CD4-positive, alpha-beta T cell (primary cell): ENCODE measurements at regions of chr15 and their contacts with region 1.

Region 1: GRCh38 chr15:78065284-78065872 is 12.1 kb downstream of the TBC1D2B start:
- DNase-seq: peak in 3 of 14 experiments; percentile 50 to 65 (median 50)
- ATAC-seq: peak; percentile 13
- H3K4me3 ChIP-seq: peak overlapping the region; percentile 9
- H3K4me3 Mint-ChIP-seq: no peak overlapping the region
- H3K27ac ChIP-seq: peak overlapping the region; percentile 39 to 79
- H3K27ac Mint-ChIP-seq: no peak overlapping the region
- H3K4me1 ChIP-seq: peaks cover 86% of the 10 kb centered on the region
- H3K4me1 Mint-ChIP-seq: peaks cover 2% of the 10 kb centered on the region
- H3K27me3 ChIP-seq: no peaks in the 10 kb centered on the region
- H3K27me3 Mint-ChIP-seq: no peaks in the 10 kb centered on the region
- CTCF ChIP-seq: no peak

Region 2: GRCh38 chr15:78044407-78045155 is 20.8 kb before region 1 on chr15:
- CTCF ChIA-PET with region 1: interaction called, 22 read pairs
- POLR2A ChIA-PET with region 1: interaction called, 304 read pairs
- intact Hi-C with region 1: no loop called
- DNase-seq: peak in 3 of 14 experiments; percentile 63 to 69 (median 67)
- ATAC-seq: peak; percentile 41
- H3K4me3 ChIP-seq: no peak overlapping the region
- H3K4me3 Mint-ChIP-seq: peak overlapping the region; percentile 69
- H3K27ac ChIP-seq: peak overlapping the region in 1 of 2 donors; percentile 78
- H3K27ac Mint-ChIP-seq: peak overlapping the region; percentile 84
- H3K4me1 ChIP-seq: peaks cover 87% of the 10 kb centered on the region
- H3K4me1 Mint-ChIP-seq: peaks cover 93% of the 10 kb centered on the region
- H3K27me3 ChIP-seq: no peaks in the 10 kb centered on the region
- H3K27me3 Mint-ChIP-seq: no peaks in the 10 kb centered on the region
- CTCF ChIP-seq: no peak

Region 3: GRCh38 chr15:78049691-78050440 is 15.5 kb before region 1 on chr15:
- CTCF ChIA-PET with region 1: interaction called, 22 read pairs
- POLR2A ChIA-PET with region 1: interaction called, 304 read pairs
- intact Hi-C with region 1: loop called in 1 of 2 experiments (anchors 1 kb)
- DNase-seq: peak in 8 of 14 experiments; percentile 25 to 79 (median 45)
- ATAC-seq: peak; percentile 47
- H3K4me3 ChIP-seq: peak overlapping the region; percentile 16
- H3K4me3 Mint-ChIP-seq: peak overlapping the region; percentile 76
- H3K27ac ChIP-seq: peak overlapping the region; percentile 78 to 83
- H3K27ac Mint-ChIP-seq: peak overlapping the region; percentile 84
- H3K4me1 ChIP-seq: peaks cover 89% of the 10 kb centered on the region
- H3K4me1 Mint-ChIP-seq: peaks cover 98% of the 10 kb centered on the region
- H3K27me3 ChIP-seq: no peaks in the 10 kb centered on the region
- H3K27me3 Mint-ChIP-seq: no peaks in the 10 kb centered on the region
- CTCF ChIP-seq: no peak